Panc1 (cell line): ENCODE measurements at regions of chr1 and their contacts with region 1.

Region 1: DNA sequence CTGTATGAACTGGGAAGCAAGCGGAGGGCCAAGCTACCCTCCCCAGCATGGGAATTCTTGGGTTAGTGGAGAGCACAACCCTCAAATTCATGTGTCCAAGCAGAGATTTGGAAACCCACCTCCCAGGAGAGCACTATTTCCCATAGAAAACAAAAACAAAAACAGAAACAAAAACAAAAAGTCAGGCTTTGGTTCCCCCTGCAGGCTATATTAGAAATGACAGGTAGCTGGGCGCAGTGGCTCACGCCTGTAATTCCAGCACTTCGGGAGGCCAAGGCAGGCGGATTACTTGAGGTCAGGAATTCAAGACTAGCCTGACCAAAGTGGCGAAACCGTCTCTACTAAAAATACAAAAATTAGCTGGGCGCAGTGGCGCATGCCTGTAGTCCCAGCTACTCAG is 10.8 kb downstream of the MINDY1 start:
- DNase-seq: no peak
- ATAC-seq: peak; percentile 69; the same call in 1 of the 2 replicates
- H3K4me3 ChIP-seq: no peak overlapping the region
- H3K27ac ChIP-seq: no peak overlapping the region
- H3K4me1 ChIP-seq: peaks cover 5% of the 10 kb centered on the region; the same call in 1 of the 2 replicates
- H3K27me3 ChIP-seq: no peaks in the 10 kb centered on the region
- CTCF ChIP-seq: peak; percentile 89

Region 2: GRCh38 chr1:150493163-150493562 is 502.7 kb before region 1 on chr1:
- CTCF ChIA-PET with region 1: no interaction called
- POLR2A ChIA-PET with region 1: interaction called, 10 read pairs
- in situ Hi-C with region 1: no loop called
- intact Hi-C with region 1: no loop called
- DNase-seq: no peak
- ATAC-seq: no peak
- H3K4me3 ChIP-seq: no peak overlapping the region
- H3K27ac ChIP-seq: no peak overlapping the region
- H3K4me1 ChIP-seq: peaks cover 3% of the 10 kb centered on the region
- H3K27me3 ChIP-seq: no peaks in the 10 kb centered on the region
- CTCF ChIP-seq: no peak

Region 3: DNA sequence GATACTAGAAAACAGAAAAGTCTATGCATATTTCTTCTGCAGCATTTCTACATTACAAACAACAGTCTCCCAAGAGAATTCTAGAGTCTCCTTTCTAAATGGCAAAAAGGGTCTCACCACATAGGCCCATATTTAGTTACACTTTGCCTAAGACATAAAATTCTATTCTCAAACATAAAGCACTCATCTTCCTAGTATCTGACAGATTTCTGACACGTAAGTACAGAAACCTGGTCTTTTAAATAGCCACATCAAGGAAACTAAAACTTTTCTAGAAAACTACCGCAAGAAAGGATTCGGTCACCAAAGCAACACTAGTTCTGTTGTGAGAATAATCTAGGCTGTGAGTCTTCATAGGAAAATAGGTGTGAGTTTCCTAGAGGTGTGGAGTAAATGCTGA is 154.3 kb before region 1 on chr1:
- CTCF ChIA-PET with region 1: interaction called, 12 read pairs
- POLR2A ChIA-PET with region 1: no interaction called
- in situ Hi-C with region 1: no loop called
- intact Hi-C with region 1: no loop called
- DNase-seq: no peak
- ATAC-seq: no peak
- H3K4me3 ChIP-seq: no peak overlapping the region
- H3K27ac ChIP-seq: no peak overlapping the region
- H3K4me1 ChIP-seq: no peaks in the 10 kb centered on the region
- H3K27me3 ChIP-seq: no peaks in the 10 kb centered on the region
- CTCF ChIP-seq: no peak

Region 4: GRCh38 chr1:151006327-151007052 is 10.6 kb after region 1 on chr1 and contains the start of gene MINDY1:
- CTCF ChIA-PET with region 1: interaction called, 13 read pairs
- POLR2A ChIA-PET with region 1: interaction called, 7 read pairs
- in situ Hi-C with region 1: no loop called
- intact Hi-C with region 1: no loop called
- DNase-seq: no peak
- ATAC-seq: peak; percentile 88
- H3K4me3 ChIP-seq: peak within 1 kb of the TSS; percentile 91 to 95
- H3K27ac ChIP-seq: peak within 1 kb of the TSS; percentile 90
- H3K4me1 ChIP-seq: peaks cover 7% of the 10 kb centered on the region
- H3K27me3 ChIP-seq: no peaks in the 10 kb centered on the region
- CTCF ChIP-seq: peak; percentile 71; the same call in 1 of the 2 replicates
- total RNA-seq, gene MINDY1: 15.8 TPM

Region 5: DNA sequence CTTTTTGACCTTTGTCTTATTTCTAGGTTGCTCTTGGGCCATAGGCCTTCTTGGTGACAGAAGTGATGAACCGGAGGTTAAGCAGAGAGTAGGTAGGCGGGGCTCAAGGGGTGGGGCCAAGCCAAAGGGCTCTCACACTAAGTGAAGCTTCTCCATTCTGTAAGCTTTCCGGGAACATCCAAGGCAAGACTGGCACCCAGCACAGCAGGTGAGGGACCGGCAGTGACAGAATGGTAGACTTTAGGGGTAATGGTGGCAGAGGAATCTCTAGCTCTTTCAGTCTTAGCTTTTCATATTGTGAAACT is 160.6 kb after region 1 on chr1 and contains the start of gene TNFAIP8L2:
- CTCF ChIA-PET with region 1: no interaction called
- POLR2A ChIA-PET with region 1: no interaction called
- in situ Hi-C with region 1: no loop called
- intact Hi-C with region 1: no loop called
- DNase-seq: no peak
- ATAC-seq: peak; percentile 87
- H3K4me3 ChIP-seq: no peak within 1 kb of the TSS
- H3K27ac ChIP-seq: no peak within 1 kb of the TSS
- H3K4me1 ChIP-seq: no peaks in the 10 kb centered on the region
- H3K27me3 ChIP-seq: no peaks in the 10 kb centered on the region
- CTCF ChIP-seq: no peak
- total RNA-seq, gene TNFAIP8L2: not detected